Left colon (tissue), 2 donors: ENCODE measurements at regions of chr1 and their contacts with region 1.

Region 1: DNA sequence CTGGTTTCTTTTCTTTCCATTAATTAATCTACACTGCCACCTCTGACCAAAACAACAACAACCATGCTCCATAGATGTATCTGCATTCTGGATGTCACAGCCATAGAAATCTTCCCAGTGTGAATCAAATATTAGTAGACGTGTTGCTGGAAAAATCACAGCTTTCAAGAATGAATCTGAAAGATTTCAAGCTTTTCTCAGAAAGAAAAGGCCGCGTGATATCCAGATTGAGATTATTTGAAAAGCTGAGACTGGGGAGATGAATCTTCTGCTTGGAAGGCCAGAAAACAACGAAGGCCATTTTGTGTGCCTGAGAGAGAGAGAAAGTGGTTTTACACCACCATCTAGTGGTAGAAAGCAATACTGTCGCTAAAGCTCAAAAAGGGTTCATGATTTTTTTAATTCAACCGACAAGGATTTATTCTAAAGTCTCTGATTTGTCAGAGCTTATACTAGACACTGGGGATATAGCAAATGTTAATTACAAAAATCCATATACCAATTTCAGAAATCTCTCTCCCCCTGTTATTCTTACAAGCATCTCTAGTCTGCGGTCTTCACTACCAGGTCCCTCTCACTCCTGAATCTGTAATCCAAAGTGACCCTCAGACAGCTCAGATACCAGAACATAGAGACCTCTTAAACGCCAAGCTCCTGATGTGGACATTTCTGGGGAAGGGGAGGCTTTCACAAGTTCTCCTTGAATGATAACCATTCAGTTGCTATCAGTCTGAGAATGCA is 87.5 kb upstream of the SGIP1 start:
- DNase-seq: no peak
- ATAC-seq: peak; percentile 78

Region 2: DNA sequence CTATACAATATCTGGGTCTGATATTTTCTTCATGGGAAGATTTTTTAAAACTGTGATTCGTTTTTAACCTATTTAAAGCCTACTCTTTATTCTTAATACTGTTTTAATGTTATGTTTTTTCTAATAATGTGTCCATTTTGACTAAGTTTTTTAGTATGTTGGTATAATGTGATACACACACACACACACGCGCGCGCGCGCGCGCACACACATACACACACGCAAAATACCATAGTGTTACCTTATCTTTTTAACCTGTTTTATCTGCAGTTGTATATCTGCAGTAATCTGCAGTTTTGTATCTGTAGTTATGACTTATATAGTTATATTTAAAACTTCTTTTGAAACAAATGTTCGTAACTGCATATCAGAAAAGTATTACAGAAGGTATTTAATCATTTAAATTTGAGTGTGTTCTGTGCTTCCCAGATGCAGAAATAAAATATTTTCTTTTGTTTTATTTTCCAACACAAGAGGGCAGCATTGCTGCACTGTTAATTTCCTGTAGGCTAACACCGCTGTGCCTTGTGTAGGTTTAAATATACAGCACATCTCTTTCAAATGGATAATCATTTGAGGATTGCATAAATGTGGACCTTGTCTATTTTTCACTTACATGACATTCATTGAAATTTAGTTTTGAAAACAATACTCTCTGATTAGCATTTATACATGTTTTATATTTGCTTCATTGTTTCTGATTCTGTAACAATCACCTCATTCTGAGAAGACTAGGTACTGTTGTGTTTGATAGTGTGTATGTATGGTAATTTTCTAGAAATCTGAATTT is 487.7 kb before region 1 on chr1:
- intact Hi-C with region 1: loop called in 1 of 2 experiments (anchors 10 kb)
- DNase-seq: no peak
- ATAC-seq: peak; percentile 41

Region 3: GRCh38 chr1:66256629-66257572 is 189.5 kb before region 1 on chr1:
- intact Hi-C with region 1: loop called in 1 of 2 experiments (anchors 2 kb)
- DNase-seq: no peak
- ATAC-seq: no peak

Region 4: DNA sequence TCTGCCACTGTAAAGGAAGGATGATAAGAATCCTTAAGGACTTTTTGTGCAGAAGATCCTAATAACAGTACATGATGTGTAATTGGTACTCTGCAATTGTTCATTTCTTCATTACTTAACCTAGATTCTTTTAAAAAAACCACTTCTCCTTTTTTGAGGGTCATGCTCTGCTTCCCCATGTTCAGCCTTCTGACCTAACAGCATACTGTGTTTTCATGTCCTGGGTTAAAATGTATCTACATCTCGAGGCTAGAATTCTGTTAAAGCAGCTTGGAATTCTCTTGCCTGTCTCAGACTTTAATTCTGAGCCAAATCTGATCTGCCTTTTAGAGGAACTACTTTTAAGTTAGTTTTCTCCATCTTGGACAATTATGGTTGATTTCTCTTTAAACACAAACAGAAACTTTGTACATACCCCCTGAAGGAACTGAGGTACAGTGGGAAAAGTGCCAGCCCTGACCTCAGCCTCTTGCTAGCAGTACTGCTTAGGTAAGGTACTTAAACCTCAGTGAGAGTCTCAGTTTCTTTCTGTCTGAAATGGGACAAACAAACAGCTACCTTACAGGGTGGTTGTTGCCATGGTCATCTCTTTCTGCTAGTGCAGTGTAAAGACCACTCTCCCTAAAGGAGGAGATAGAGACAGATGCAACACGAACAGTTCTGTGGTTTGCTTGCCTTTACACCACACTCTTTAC is 202.6 kb after region 1 on chr1:
- intact Hi-C with region 1: no loop called
- DNase-seq: peak in 1 of 2 donors; percentile 9
- ATAC-seq: no peak